Activated B cell treated with CpG ODN at 0.5 μM for 24 hours (primary cell): ENCODE measurements at regions of chr9 and their contacts with region 1.

Region 1: GRCh38 chr9:33721674-33722358 is 73.5 kb upstream of the PRSS3 start:
- DNase-seq: peak; percentile 72
- ATAC-seq: peak; percentile 85
- H3K4me3 Mint-ChIP-seq: no peak overlapping the region
- H3K27ac Mint-ChIP-seq: no peak overlapping the region
- H3K4me1 Mint-ChIP-seq: peaks cover 4% of the 10 kb centered on the region
- H3K27me3 Mint-ChIP-seq: peaks cover 23% of the 10 kb centered on the region
- CTCF ChIP-seq: peak; percentile 97

Region 2: GRCh38 chr9:32940740-32941139 is 781.1 kb before region 1 on chr9:
- CTCF ChIA-PET with region 1: no interaction called
- POLR2A ChIA-PET with region 1: no interaction called
- intact Hi-C with region 1: no loop called
- DNase-seq: no peak
- ATAC-seq: no peak
- H3K4me3 Mint-ChIP-seq: no peak overlapping the region
- H3K27ac Mint-ChIP-seq: no peak overlapping the region
- H3K4me1 Mint-ChIP-seq: no peaks in the 10 kb centered on the region
- H3K27me3 Mint-ChIP-seq: no peaks in the 10 kb centered on the region
- CTCF ChIP-seq: no peak

Region 3: DNA sequence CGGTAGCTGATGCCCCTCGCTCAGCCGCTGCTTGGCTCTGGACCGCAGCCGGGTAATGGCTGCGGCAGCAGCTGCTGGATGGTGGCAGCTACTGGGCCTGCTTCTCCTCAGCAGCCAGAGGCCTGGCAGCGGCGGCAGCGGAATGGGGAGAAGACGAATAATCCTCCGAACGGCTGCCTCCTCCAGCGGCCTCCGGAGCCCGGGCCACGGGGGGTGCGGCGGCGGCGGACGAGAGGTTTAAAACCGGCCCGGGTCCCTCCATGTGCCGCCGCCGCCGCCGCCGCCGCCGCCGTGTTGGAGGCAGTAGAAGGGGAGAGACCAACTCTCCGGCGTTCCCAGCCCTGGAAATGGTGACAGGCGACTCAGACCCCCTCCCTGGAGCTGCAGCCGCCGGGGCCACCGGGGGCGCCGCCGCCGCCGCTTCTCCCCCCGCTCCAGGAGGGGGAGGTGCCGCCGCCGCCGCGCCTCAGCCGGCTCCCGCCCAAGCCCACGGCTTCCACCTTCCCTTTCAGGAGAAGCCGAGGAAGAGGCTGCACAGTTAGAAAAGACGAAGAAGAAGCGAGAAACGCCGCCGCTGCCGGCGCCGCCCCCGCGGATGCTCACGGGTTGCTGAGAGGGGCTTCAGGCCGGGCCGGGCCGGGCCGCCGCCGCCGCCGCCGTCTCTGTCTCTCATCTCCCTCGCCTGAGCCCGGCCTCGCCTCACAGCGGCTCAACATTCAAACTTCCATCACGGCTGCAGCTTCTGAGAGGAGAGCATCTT is 44.9 kb before region 1 on chr9:
- CTCF ChIA-PET with region 1: no interaction called
- POLR2A ChIA-PET with region 1: no interaction called
- intact Hi-C with region 1: loop called (anchors 5 kb)
- DNase-seq: peak; percentile 36
- ATAC-seq: peak; percentile 50
- H3K4me3 Mint-ChIP-seq: peak overlapping the region; percentile 86
- H3K27ac Mint-ChIP-seq: no peak overlapping the region
- H3K4me1 Mint-ChIP-seq: peaks cover 7% of the 10 kb centered on the region
- H3K27me3 Mint-ChIP-seq: peaks cover 54% of the 10 kb centered on the region
- CTCF ChIP-seq: no peak

Region 4: DNA sequence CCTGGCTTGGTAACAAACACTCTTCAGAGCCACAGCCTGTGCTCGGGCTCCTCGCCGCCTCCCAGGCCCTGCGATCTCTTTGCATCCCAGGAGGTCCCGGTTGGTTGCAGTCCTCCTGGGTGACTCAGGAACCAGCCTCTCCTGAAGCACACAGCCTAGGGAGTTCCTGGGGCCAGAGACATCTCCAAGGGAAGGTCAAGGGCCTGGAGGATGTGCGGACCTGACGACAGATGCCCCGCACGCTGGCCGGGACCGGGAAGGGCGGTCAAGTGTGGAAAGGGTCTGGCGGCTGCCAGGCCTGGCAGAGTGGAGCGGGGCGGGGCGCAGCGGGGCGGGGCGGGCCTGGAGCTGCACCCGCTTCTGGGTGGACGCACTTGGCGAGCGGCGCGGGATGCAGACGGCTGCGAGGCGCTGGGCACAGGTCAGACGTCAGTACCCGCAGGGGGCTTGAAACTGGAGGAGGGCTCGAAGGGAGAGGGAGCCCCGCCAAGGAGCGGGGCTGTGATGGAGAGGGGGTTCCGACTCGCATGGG is 28.6 kb after region 1 on chr9:
- CTCF ChIA-PET with region 1: no interaction called
- POLR2A ChIA-PET with region 1: no interaction called
- intact Hi-C with region 1: no loop called
- DNase-seq: no peak
- ATAC-seq: no peak
- H3K4me3 Mint-ChIP-seq: no peak overlapping the region
- H3K27ac Mint-ChIP-seq: no peak overlapping the region
- H3K4me1 Mint-ChIP-seq: peaks cover 12% of the 10 kb centered on the region
- H3K27me3 Mint-ChIP-seq: peaks cover 57% of the 10 kb centered on the region
- CTCF ChIP-seq: no peak

Region 5: DNA sequence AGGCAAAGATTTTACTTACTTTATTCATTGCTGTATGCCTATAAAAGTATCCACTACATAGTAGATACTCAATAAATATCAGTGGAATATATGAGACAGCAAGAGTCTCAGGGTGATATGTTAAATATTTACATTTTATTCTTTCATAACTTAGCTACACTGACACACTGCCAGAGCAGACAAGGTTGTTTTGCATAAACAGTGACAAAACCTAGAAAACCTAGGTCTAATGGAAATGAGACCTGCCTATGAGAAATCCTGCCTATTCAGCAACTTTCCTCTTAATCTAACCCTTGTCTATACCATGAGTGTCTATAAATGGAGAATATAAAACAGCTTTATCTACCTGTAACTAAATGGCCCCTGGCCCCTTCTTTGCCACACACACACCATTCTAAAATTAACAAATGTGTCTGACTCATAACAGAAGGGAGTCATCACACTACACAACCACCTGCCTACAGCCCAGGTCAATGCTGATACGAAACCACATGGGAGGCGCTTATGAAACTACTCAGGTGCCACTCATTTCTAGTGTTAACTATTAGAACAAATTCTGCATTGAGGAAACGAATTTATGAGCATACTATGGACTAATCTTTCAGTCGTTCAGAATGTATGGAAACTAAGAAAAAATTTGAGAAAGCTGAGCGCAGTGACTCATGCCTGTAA is 266.5 kb after region 1 on chr9:
- CTCF ChIA-PET with region 1: no interaction called
- POLR2A ChIA-PET with region 1: no interaction called
- intact Hi-C with region 1: no loop called
- DNase-seq: no peak
- ATAC-seq: peak; percentile 71
- H3K4me3 Mint-ChIP-seq: no peak overlapping the region
- H3K27ac Mint-ChIP-seq: peak overlapping the region; percentile 2
- H3K4me1 Mint-ChIP-seq: peaks cover 6% of the 10 kb centered on the region
- H3K27me3 Mint-ChIP-seq: no peaks in the 10 kb centered on the region
- CTCF ChIP-seq: no peak